Activated CD8-positive, alpha-beta T cell treated with anti-CD3 and anti-CD28 coated beads for 36 hours (primary cell): ENCODE measurements at regions of chr1 and their contacts with region 1.

Region 1: GRCh38 chr1:67515324-67516080 is 85.3 kb upstream of the SERBP1 start:
- DNase-seq: no peak
- ATAC-seq: no peak
- H3K4me3 Mint-ChIP-seq: no peak overlapping the region
- H3K27ac Mint-ChIP-seq: no peak overlapping the region
- H3K4me1 Mint-ChIP-seq: no peaks in the 10 kb centered on the region
- H3K27me3 Mint-ChIP-seq: no peaks in the 10 kb centered on the region
- CTCF ChIP-seq: no peak

Region 2: GRCh38 chr1:67441183-67441582 is 74.3 kb before region 1 on chr1:
- CTCF ChIA-PET with region 1: no interaction called
- POLR2A ChIA-PET with region 1: no interaction called
- intact Hi-C with region 1: no loop called
- DNase-seq: peak; percentile 75
- ATAC-seq: peak; percentile 32
- H3K4me3 Mint-ChIP-seq: no peak overlapping the region
- H3K27ac Mint-ChIP-seq: peak overlapping the region; percentile 33
- H3K4me1 Mint-ChIP-seq: peaks cover 16% of the 10 kb centered on the region
- H3K27me3 Mint-ChIP-seq: no peaks in the 10 kb centered on the region
- CTCF ChIP-seq: no peak

Region 3: DNA sequence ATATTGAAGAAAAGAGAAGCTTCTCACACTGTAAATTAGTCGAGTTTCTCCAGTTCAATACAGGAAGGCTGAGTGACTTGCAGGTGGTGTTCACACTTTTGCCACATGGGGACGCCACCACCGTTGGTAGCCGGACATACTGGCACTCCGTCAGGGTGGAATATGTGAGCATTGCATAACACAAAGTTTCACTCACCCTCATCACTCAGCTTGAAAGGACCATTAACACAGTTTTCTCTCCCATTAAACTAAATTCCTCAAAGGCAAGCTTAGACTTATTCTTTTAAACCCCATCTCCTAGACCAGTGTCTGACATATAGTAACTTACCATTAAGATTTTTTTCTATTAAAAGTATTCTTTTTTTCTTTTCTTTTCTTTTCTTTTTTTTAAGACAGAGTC is 20.0 kb after region 1 on chr1:
- CTCF ChIA-PET with region 1: interaction called, 10 read pairs
- POLR2A ChIA-PET with region 1: no interaction called
- intact Hi-C with region 1: no loop called
- DNase-seq: peak; percentile 81
- ATAC-seq: peak; percentile 82
- H3K4me3 Mint-ChIP-seq: no peak overlapping the region
- H3K27ac Mint-ChIP-seq: no peak overlapping the region
- H3K4me1 Mint-ChIP-seq: peaks cover 10% of the 10 kb centered on the region
- H3K27me3 Mint-ChIP-seq: peaks cover 2% of the 10 kb centered on the region
- CTCF ChIP-seq: peak; percentile 85